ENCODE measurements at regions of chr5 and their contacts with region 1.

Region 1: GRCh38 chr5:58886315-58887207 is 303.7 kb downstream of the RAB3C start:
- DNase-seq: peak; percentile 66 to 87
- ATAC-seq: peak; percentile 77
- H3K4me3 ChIP-seq: no peak overlapping the region
- H3K27ac ChIP-seq: no peak overlapping the region
- H3K4me1 ChIP-seq: peaks cover 0 to 4% of the 10 kb centered on the region in 2 donors
- H3K27me3 ChIP-seq: no peaks in the 10 kb centered on the region

Region 2: GRCh38 chr5:59007460-59008063 is 121.0 kb after region 1 on chr5:
- intact Hi-C with region 1: loop called (anchors 5 kb)
- DNase-seq: no peak
- ATAC-seq: no peak
- H3K4me3 ChIP-seq: no peak overlapping the region
- H3K27ac ChIP-seq: no peak overlapping the region
- H3K4me1 ChIP-seq: no peaks in the 10 kb centered on the region
- H3K27me3 ChIP-seq: no peaks in the 10 kb centered on the region

Region 3: DNA sequence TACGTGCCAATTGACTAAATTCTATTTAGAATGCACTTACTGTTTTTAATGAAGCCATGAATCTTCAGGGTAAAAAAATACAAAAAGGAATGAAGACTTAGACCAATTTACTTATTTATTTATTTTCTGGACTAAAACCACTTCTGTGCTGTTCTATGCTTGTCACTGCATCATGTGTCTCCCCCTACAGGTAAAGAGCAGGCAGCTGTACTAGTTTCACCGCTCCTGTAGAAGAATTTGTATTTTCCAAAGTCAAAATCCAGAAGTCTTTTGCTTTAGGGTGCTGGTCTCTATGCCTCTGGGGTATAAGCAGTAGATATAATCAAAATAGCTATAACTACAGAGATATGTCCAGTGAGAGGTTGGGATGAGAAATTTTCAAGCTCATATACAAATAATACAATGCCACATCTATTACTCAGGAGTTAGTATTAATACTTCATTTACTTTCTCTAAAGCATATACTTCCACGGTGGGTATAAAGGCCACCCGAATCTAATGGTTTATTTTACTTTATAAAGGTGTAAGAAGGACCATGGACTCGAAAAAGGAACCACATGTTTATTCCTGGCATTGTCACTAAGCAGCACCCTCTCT is 287.8 kb after region 1 on chr5:
- intact Hi-C with region 1: loop called (anchors 2 to 5 kb)
- DNase-seq: no peak
- ATAC-seq: peak; percentile 69
- H3K4me3 ChIP-seq: no peak overlapping the region
- H3K27ac ChIP-seq: no peak overlapping the region
- H3K4me1 ChIP-seq: no peaks in the 10 kb centered on the region
- H3K27me3 ChIP-seq: no peaks in the 10 kb centered on the region

Region 4: DNA sequence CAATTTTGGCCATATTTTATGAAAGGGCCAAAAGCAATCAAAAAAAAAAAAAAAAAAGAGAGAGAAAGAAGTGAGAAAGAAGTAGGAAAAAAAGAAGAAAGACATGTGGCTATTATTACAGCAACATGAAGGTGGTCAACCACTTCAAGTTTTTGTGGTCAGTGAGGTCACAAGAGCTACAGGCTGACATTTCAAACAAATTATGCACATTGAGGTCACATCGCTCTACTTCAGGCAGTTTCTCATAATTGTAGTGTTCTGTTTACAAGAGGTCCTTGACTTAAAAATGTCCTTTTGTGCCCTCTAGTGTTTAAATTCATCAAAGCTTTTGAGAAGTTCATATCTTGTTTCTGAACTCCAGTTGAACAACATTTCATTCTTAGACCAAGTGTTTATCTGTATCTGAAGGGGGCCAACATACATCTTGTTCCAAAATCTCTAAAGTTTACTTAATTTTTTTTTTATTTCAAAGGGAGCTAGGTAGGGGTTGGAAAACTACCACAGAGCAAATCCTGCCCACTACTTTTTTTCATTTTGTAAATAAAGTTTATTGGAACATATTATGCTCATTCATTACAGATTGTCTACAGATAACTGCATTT is 493.9 kb after region 1 on chr5:
- intact Hi-C with region 1: loop called in 1 of 2 experiments (anchors 10 kb)
- DNase-seq: no peak
- ATAC-seq: peak; percentile 70
- H3K4me3 ChIP-seq: no peak overlapping the region
- H3K27ac ChIP-seq: no peak overlapping the region
- H3K4me1 ChIP-seq: no peaks in the 10 kb centered on the region
- H3K27me3 ChIP-seq: no peaks in the 10 kb centered on the region